Prostate gland (tissue), 2 donors: ENCODE measurements at regions of chr10 and their contacts with region 1.

Region 1: GRCh38 chr10:4283846-4284610 is 499.0 kb upstream of the KLF6 start:
- DNase-seq: no peak
- H3K4me3 ChIP-seq: no peak overlapping the region
- H3K27ac ChIP-seq: peak overlapping the region; percentile 29 to 54
- H3K4me1 ChIP-seq: peaks cover 2% of the 10 kb centered on the region
- H3K27me3 ChIP-seq: no peaks in the 10 kb centered on the region
- CTCF ChIP-seq: no peak
- POLR2A ChIP-seq: no peak

Region 2: GRCh38 chr10:4061441-4061951 is 222.5 kb before region 1 on chr10:
- intact Hi-C with region 1: loop called (anchors 5 kb)
- DNase-seq: peak; percentile 97
- H3K4me3 ChIP-seq: no peak overlapping the region
- H3K27ac ChIP-seq: peak overlapping the region; percentile 11 to 38
- H3K4me1 ChIP-seq: peaks cover 3% of the 10 kb centered on the region
- H3K27me3 ChIP-seq: no peaks in the 10 kb centered on the region
- CTCF ChIP-seq: no peak
- POLR2A ChIP-seq: no peak

Region 3: DNA sequence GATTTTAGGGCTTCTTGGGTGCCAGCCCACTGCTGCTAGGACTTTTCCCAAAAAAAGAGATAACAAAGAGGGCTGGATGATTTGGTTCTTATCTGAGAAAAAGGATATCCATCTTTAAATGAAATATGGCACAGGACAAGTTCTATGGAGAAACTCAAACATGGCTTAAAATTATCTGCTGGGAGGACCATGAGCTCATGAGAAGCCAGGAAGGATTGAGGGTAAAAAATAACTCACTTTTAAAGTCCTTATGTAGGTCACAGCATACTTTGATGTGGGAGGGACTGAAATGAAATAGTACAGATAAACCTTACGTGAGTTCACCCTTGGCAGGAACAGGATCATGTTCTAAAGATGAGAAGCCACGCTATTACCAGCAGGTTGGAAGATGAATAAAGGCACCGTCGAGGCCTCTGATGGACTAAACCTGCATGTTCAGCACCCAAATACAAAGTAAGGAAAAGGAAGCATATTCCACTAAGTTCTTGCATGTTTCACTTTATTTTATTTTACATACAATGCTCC is 129.8 kb before region 1 on chr10:
- intact Hi-C with region 1: no loop called
- DNase-seq: no peak
- H3K4me3 ChIP-seq: no peak overlapping the region
- H3K27ac ChIP-seq: no peak overlapping the region
- H3K4me1 ChIP-seq: no peaks in the 10 kb centered on the region
- H3K27me3 ChIP-seq: no peaks in the 10 kb centered on the region
- CTCF ChIP-seq: no peak
- POLR2A ChIP-seq: no peak

Region 4: DNA sequence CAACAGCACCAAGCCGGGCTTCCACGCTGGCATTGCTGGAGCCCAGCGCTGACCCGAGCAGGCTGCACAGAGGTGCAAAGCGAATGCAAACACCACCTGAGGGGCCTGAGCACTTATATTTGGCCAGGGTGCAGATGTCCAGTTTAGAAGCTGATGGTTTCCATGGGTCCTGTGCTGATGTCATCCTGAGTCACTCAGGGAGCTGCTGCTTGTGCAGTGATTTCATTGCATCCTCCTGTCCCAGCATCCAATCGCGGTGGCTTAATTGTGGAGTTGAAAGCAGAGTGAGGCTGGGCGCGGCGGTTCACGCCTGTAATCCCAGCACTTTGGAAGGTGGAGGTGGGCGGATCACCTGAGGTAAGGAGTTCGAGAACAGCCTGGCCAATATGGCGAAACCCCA is 88.8 kb before region 1 on chr10:
- intact Hi-C with region 1: loop called (anchors 5 kb)
- DNase-seq: no peak
- H3K4me3 ChIP-seq: no peak overlapping the region
- H3K27ac ChIP-seq: no peak overlapping the region
- H3K4me1 ChIP-seq: no peaks in the 10 kb centered on the region
- H3K27me3 ChIP-seq: no peaks in the 10 kb centered on the region
- CTCF ChIP-seq: no peak
- POLR2A ChIP-seq: no peak

Region 5: GRCh38 chr10:4241724-4242345 is 42.2 kb before region 1 on chr10:
- intact Hi-C with region 1: loop called (anchors 5 kb)
- DNase-seq: no peak
- H3K4me3 ChIP-seq: no peak overlapping the region
- H3K27ac ChIP-seq: no peak overlapping the region
- H3K4me1 ChIP-seq: no peaks in the 10 kb centered on the region
- H3K27me3 ChIP-seq: no peaks in the 10 kb centered on the region
- CTCF ChIP-seq: no peak
- POLR2A ChIP-seq: no peak

Region 6: DNA sequence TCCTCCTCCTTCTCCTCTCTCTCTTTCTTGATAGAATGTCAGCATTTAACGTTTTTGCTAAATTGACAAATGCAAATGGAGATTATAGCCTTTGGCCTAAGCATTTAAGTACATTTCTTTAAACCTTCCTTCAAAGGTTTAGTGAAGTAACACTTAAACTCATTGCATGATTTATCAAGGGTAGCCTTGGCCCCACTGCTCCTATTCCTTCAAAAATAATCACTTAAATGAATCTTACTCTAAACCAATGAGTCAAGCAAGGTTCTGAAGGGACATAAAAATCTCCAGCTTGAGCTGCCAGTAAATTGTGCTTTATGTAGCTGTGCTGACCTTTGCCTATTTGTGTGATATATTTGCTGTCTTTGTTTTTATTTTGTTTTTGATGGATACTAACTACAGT is 183.5 kb after region 1 on chr10:
- intact Hi-C with region 1: no loop called
- DNase-seq: no peak
- H3K4me3 ChIP-seq: no peak overlapping the region
- H3K27ac ChIP-seq: no peak overlapping the region
- H3K4me1 ChIP-seq: no peaks in the 10 kb centered on the region
- H3K27me3 ChIP-seq: no peaks in the 10 kb centered on the region
- CTCF ChIP-seq: no peak
- POLR2A ChIP-seq: no peak

Region 7: DNA sequence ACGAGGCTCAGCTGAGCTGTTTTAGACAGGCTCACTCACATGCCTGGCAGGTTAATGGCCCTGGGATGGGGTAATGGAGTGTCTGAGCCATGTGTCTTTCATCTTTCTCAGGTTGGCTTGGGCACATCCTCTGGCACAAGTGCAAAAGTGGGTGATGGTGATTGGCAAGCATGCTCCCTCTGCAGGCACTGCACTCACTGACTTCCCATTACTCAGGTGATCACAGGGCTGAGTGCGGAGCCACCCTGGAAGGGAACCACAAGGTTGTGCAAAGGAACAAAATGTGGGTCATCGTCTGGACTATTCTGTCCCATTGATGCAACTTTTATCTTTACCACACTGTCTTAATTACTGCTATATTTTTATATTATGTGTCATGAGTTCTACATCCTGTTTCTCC is 297.9 kb after region 1 on chr10:
- intact Hi-C with region 1: no loop called
- DNase-seq: no peak
- H3K4me3 ChIP-seq: no peak overlapping the region
- H3K27ac ChIP-seq: no peak overlapping the region
- H3K4me1 ChIP-seq: no peaks in the 10 kb centered on the region
- H3K27me3 ChIP-seq: no peaks in the 10 kb centered on the region
- CTCF ChIP-seq: no peak
- POLR2A ChIP-seq: no peak